Head of caudate nucleus (tissue), 42 donors: ENCODE measurements at regions of chr15 and their contacts with region 1.

Region 1: DNA sequence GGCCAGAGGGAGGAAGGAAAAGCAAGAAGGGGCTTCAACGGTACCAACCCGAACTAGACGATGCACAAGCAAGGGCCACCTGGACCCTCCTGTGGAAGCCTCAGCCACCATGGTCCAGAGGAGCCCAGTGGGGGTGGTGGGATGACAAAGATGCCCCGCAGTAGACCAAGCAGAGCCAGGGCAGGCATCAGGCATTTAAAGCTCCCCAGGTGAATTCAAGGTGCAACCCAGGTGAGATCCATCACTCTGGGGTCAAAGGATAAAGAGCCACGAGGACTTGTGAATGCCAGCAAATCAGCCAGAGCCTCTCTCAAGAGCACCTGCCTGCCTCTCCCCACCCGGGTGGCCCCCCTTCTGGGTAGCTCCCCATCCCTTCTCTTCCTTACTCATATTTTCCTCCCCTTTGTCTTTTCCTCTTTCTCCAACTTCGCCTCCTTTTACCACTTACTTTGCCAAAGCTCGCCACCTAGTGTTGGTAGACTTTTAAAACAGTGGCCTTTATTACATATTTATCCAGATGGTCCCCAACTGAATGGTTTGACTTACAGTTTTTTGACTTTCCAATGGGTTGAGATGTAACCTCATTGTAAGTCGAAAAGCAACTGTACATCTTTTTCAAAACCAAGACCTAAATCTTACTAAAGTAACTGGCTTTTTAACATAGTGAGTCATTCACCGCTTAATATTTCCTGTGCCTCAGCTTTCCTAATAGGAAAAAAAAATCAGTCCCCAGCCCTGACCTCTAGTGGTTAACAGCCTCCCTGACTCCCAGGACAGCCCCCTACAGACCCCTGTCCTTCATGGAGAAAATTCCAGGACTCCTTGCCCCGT is 18.8 kb downstream of the PLA2G4F start:
- DNase-seq: peak in 21 of 42 donors; percentile 12 to 78 (median 43)

Region 2: GRCh38 chr15:41989259-41989933 is 148.2 kb before region 1 on chr15:
- intact Hi-C with region 1: loop called (anchors 10 kb)
- DNase-seq: peak; percentile 67 to 96 (median 90)

Region 3: GRCh38 chr15:42065033-42065432 is 72.6 kb before region 1 on chr15:
- intact Hi-C with region 1: loop called (anchors 5 kb)
- DNase-seq: peak in 39 of 42 donors; percentile 18 to 82 (median 56)

Region 4: GRCh38 chr15:42273102-42273899 is 135.7 kb after region 1 on chr15 and contains the starts of genes GANC and TMEM87A:
- intact Hi-C with region 1: no loop called
- DNase-seq: peak; percentile 93 to 100 (median 99)